Heart right ventricle (tissue), 16 donors: ENCODE measurements at regions of chr3 and their contacts with region 1.

Region 1: GRCh38 chr3:173553635-173554280 is 156.2 kb downstream of the NLGN1 start:
- DNase-seq: peak in 1 of 2 donors; percentile 16
- ATAC-seq: peak in 1 of 8 donors; percentile 37
- H3K4me3 ChIP-seq: no peak overlapping the region
- H3K27ac ChIP-seq: no peak overlapping the region
- H3K4me1 ChIP-seq: peaks cover 0 to 8% (median 0%) of the 10 kb centered on the region in 9 donors
- H3K27me3 ChIP-seq: no peaks in the 10 kb centered on the region
- CTCF ChIP-seq: peak; percentile 46 to 79 (median 67)

Region 2: DNA sequence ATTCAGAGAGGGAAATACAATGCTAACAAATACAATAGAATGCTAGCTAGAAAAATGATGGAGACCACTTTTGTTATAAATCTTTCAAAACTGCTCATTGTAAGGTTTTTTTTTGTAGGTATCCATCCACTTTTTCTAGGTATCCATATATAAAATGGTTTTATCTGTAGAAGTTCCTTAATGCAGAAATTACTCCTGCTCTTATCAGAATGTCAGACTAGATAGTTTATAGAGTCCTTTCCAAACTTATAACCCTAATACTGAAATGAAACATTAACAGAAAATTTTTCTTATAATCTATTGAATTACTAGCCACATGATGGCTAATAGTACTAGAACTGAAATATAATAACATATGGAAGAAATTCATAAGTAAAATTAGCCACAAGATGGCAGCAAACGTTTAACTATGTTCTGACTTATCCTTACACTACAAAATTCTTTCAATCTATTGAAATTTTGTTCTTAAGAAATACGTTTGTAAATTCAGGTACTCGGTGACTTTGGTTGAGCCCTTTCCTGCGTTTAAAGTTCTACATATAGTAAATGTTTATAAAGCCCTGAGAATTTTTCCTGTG is 744.7 kb before region 1 on chr3:
- intact Hi-C with region 1: loop called in 6 of 10 experiments (anchors 5 to 10 kb)
- DNase-seq: no peak
- ATAC-seq: no peak
- H3K4me3 ChIP-seq: no peak overlapping the region
- H3K27ac ChIP-seq: no peak overlapping the region
- H3K4me1 ChIP-seq: no peaks in the 10 kb centered on the region
- H3K27me3 ChIP-seq: no peaks in the 10 kb centered on the region
- CTCF ChIP-seq: peak in 8 of 9 donors; percentile 9 to 64 (median 48)

Region 3: GRCh38 chr3:172814738-172815137 is 739.0 kb before region 1 on chr3:
- intact Hi-C with region 1: loop called in 6 of 10 experiments (anchors 5 to 10 kb)
- DNase-seq: no peak
- ATAC-seq: peak in 3 of 8 donors; percentile 10 to 41 (median 22)
- H3K4me3 ChIP-seq: no peak overlapping the region
- H3K27ac ChIP-seq: peak overlapping the region in 3 of 10 donors; percentile 58 to 76 (median 69)
- H3K4me1 ChIP-seq: peaks cover 0 to 13% (median 0%) of the 10 kb centered on the region in 9 donors
- H3K27me3 ChIP-seq: no peaks in the 10 kb centered on the region
- CTCF ChIP-seq: no peak

Region 4: GRCh38 chr3:172982736-172983364 is 570.9 kb before region 1 on chr3:
- intact Hi-C with region 1: loop called in 3 of 10 experiments (anchors 10 kb)
- DNase-seq: no peak
- ATAC-seq: peak in 6 of 8 donors; percentile 38 to 83 (median 58)
- H3K4me3 ChIP-seq: no peak overlapping the region
- H3K27ac ChIP-seq: no peak overlapping the region
- H3K4me1 ChIP-seq: peaks cover 0 to 14% (median 0%) of the 10 kb centered on the region in 9 donors
- H3K27me3 ChIP-seq: no peaks in the 10 kb centered on the region
- CTCF ChIP-seq: peak in 8 of 9 donors; percentile 21 to 55 (median 38)

Region 5: GRCh38 chr3:173371848-173372487 is 181.8 kb before region 1 on chr3:
- intact Hi-C with region 1: loop called in 1 of 10 experiments (anchors 1 kb)
- DNase-seq: peak in 1 of 2 donors; percentile 21
- ATAC-seq: no peak
- H3K4me3 ChIP-seq: no peak overlapping the region
- H3K27ac ChIP-seq: no peak overlapping the region
- H3K4me1 ChIP-seq: no peaks in the 10 kb centered on the region
- H3K27me3 ChIP-seq: no peaks in the 10 kb centered on the region
- CTCF ChIP-seq: peak; percentile 16 to 75 (median 64)

Region 6: DNA sequence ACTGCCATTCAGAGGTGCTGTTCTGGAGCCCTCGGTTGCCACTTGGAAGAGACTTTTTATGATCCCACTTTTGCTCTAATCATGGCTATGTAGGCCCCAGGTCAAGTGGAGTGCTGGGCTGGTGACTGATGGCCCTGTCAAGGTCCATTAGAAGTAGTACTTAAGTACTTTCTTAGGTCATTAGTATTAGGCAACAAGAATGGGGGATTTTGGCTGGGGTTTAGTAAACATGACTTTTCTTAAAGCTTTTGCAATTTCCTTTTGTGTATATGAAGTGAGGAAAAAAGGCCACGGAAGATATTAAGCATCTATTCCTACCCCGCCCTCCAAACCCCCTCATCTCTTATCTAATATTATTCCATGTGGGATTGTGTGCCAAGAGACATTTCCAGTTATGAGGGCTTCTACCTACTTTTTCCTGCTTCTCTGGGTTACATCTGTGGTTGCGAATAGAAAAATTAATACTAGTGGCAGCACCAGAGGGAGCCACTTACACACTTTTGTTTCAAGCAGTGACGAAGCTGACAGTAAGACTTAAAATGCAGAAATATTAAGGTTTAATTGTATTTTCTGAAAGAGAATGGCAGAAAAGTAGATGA is 142.3 kb before region 1 on chr3:
- intact Hi-C with region 1: loop called (anchors 1 to 10 kb)
- DNase-seq: peak in 1 of 2 donors; percentile 24
- ATAC-seq: peak in 7 of 8 donors; percentile 47 to 86 (median 57)
- H3K4me3 ChIP-seq: peak overlapping the region in 6 of 10 donors; percentile 9 to 40 (median 28)
- H3K27ac ChIP-seq: peak overlapping the region in 2 of 10 donors; percentile 34 to 37
- H3K4me1 ChIP-seq: peaks cover 0 to 19% (median 6%) of the 10 kb centered on the region in 9 donors
- H3K27me3 ChIP-seq: no peaks in the 10 kb centered on the region
- CTCF ChIP-seq: peak; percentile 21 to 67 (median 47)

Region 7: GRCh38 chr3:173660645-173661615 is 107.2 kb after region 1 on chr3:
- intact Hi-C with region 1: no loop called
- DNase-seq: no peak
- ATAC-seq: peak in 4 of 8 donors; percentile 75 to 84 (median 78)
- H3K4me3 ChIP-seq: no peak overlapping the region
- H3K27ac ChIP-seq: peak overlapping the region in 5 of 10 donors; percentile 30 to 61 (median 40)
- H3K4me1 ChIP-seq: peaks cover 0 to 20% (median 0%) of the 10 kb centered on the region in 9 donors
- H3K27me3 ChIP-seq: no peaks in the 10 kb centered on the region
- CTCF ChIP-seq: no peak